HepG2 (cell line): ENCODE measurements at regions of chr12 and their contacts with region 1.

Region 1: GRCh38 chr12:51083126-51083833 is at the start of gene CSRNP2:
- DNase-seq: peak; percentile 87
- ATAC-seq: peak; percentile 99
- H3K4me3 ChIP-seq: peak within 1 kb of the TSS; percentile 83 to 88 (median 88)
- H3K27ac ChIP-seq: peak within 1 kb of the TSS; percentile 70
- H3K4me1 ChIP-seq: peaks cover 15% of the 10 kb centered on the region
- H3K27me3 ChIP-seq: no peaks in the 10 kb centered on the region; a peak in 1 of 5 replicates
- CTCF ChIP-seq: peak; percentile 33
- EP300 ChIP-seq: 0 out of 4 replicates have a peak, but pooled peaks of 1 of the 2 experiments have one; percentile 38
- POLR2A ChIP-seq: peak; percentile 98 to 99
- RAD21 ChIP-seq: peak; percentile 79
- total RNA-seq, gene CSRNP2: 4.8 and 5.4 TPM in 2 replicates

Region 2: DNA sequence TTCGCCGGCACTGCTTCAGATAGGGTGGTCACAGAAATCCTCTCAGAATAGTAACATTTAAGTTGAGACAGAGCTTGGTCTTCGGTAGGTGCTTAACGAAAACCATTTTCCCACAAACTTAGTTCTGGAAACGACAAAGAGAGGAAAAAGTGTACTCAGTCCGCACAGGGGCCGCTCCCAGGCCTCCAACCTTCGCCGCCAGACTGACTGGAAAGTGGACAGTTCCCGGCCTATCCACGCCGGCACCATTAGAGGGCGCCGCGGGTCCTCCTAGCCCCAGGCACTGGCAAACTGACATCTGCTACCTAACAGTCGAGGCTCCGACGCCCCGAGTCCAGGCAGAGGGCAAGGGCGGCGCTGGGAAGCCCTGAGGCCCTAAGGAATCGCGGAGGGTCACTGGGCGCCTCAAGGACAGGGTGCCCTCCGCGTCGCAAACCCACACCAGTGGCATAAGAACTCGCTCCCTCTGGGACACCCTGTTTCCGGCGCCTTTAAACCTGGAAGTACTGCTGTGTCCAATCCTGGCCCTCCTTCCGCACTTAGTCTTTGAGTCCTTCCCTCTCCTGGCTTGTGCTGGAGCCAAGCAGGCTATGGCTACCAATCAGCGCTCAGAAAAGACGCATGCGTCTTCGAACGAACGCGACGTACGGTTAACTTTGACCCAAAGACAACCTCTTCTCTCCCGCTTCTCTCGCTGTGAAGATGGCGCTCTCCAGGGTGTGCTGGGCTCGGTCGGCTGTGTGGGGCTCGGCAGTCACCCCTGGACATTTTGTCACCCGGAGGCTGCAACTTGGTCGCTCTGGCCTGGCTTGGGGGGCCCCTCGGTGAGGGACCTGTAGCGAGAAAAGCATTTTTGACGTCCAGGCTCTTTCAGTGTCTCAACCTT is 35.4 kb before region 1 on chr12 and contains the start of gene LETMD1:
- CTCF ChIA-PET with region 1: no interaction called
- POLR2A ChIA-PET with region 1: interaction called, 4 read pairs
- in situ Hi-C with region 1: no loop called
- intact Hi-C with region 1: loop called (anchors 1 kb)
- DNase-seq: peak; percentile 98
- ATAC-seq: peak; percentile 99
- H3K4me3 ChIP-seq: peak within 1 kb of the TSS; percentile 75 to 86 (median 81)
- H3K27ac ChIP-seq: peak within 1 kb of the TSS; percentile 94
- H3K4me1 ChIP-seq: peaks cover 22% of the 10 kb centered on the region
- H3K27me3 ChIP-seq: no peaks in the 10 kb centered on the region; a peak in 1 of 5 replicates
- CTCF ChIP-seq: peak; percentile 97
- EP300 ChIP-seq: peak in 1 of 2 experiments; percentile 5; a peak in 1 of 4 replicates
- POLR2A ChIP-seq: peak; percentile 88 to 89
- RAD21 ChIP-seq: peak; percentile 96
- total RNA-seq, gene LETMD1: 31.3 and 43.3 TPM in 2 replicates

Region 3: GRCh38 chr12:51062631-51063397 is 20.5 kb before region 1 on chr12:
- CTCF ChIA-PET with region 1: no interaction called
- POLR2A ChIA-PET with region 1: interaction called, 18 read pairs
- in situ Hi-C with region 1: no loop called
- intact Hi-C with region 1: no loop called
- DNase-seq: no peak
- ATAC-seq: peak; percentile 38; the same call in 2 of the 3 replicates
- H3K4me3 ChIP-seq: no peak overlapping the region
- H3K27ac ChIP-seq: no peak overlapping the region
- H3K4me1 ChIP-seq: peaks cover 36% of the 10 kb centered on the region
- H3K27me3 ChIP-seq: no peaks in the 10 kb centered on the region
- CTCF ChIP-seq: no peak
- EP300 ChIP-seq: no peak
- POLR2A ChIP-seq: no peak
- RAD21 ChIP-seq: no peak

Region 4: DNA sequence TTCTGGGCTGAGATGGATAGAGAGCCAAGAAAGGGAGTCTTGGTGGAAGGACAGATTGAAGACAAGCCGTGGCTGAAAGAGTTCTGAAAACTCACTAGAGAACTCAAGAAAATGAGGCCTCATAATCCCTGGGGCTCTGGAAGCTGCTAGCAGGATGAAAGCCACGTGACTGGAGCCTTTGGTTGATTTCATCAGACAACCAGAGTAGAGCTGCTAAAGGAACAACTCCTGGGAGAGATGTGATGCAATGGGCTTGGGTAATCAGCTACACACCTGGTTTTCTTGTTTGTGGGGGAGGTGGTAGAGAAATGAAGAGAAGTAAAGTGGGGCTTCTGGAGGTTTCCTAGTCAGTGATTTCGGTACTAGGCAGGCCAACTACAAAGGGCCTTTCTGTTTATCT is 13.3 kb before region 1 on chr12:
- CTCF ChIA-PET with region 1: no interaction called
- POLR2A ChIA-PET with region 1: interaction called, 18 read pairs
- in situ Hi-C with region 1: no loop called
- intact Hi-C with region 1: no loop called
- DNase-seq: peak; percentile 50
- ATAC-seq: peak; percentile 22; the same call in 1 of the 3 replicates
- H3K4me3 ChIP-seq: no peak overlapping the region
- H3K27ac ChIP-seq: no peak overlapping the region
- H3K4me1 ChIP-seq: peaks cover 31% of the 10 kb centered on the region
- H3K27me3 ChIP-seq: no peaks in the 10 kb centered on the region
- CTCF ChIP-seq: no peak
- EP300 ChIP-seq: no peak
- POLR2A ChIP-seq: no peak
- RAD21 ChIP-seq: no peak

Region 5: GRCh38 chr12:51217968-51218606 is 134.8 kb after region 1 on chr12 and contains the start of gene POU6F1:
- CTCF ChIA-PET with region 1: no interaction called
- POLR2A ChIA-PET with region 1: interaction called, 15 read pairs
- in situ Hi-C with region 1: no loop called
- intact Hi-C with region 1: no loop called
- DNase-seq: peak; percentile 57
- ATAC-seq: peak; percentile 86
- H3K4me3 ChIP-seq: peak within 1 kb of the TSS; percentile 71 to 79 (median 73)
- H3K27ac ChIP-seq: peak within 1 kb of the TSS; percentile 44
- H3K4me1 ChIP-seq: peaks cover 16% of the 10 kb centered on the region
- H3K27me3 ChIP-seq: no peaks in the 10 kb centered on the region; a peak in 1 of 5 replicates
- CTCF ChIP-seq: no peak; the same call in 1 of the 2 replicates
- EP300 ChIP-seq: no peak
- POLR2A ChIP-seq: 0 out of 4 replicates have a peak, but pooled peaks of 1 of the 2 experiments have one; percentile 36
- RAD21 ChIP-seq: no peak
- total RNA-seq, gene POU6F1: 0.41 and 0.51 TPM in 2 replicates